CD8-positive, alpha-beta T cell (primary cell): ENCODE measurements at regions of chr19 and their contacts with region 1.

Region 1: DNA sequence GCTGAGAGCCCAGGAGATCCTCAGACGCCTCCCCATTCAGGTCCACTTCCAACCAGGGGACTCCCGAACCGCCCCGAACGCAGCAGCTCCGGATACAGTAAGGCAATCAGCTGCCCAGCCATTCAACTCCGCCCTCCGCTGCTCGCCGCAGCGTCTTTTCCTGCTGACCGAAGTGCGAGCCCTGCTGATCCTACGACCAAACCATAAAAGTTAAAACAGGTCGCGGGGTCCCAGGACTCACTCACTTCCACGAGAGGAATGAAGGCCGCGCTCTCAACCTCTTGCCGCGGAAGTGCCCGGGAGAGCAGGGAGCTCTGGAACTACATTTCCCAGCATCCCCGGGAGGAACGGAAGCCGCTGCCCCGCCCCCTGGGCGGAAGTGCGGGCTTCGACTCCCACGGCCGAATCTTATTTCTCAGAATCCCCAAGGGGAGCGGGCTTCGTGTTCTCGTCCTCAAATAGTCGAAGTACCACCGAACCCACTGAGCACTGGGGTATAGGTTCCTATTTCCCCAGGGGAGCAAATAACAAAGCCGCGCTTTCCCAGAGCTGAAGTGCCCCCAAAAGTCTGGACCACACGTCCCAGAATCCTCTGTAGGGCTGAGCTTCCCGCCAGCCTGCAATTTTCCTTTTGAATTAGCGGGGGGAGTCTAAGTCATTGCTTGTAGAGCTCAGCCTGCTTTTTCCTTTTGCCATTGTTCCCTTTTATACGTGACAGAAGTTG is at the start of gene ZNF45:
- DNase-seq: peak; percentile 68 to 94 (median 88)
- ATAC-seq: peak; percentile 94
- H3K4me3 ChIP-seq: peak within 1 kb of the TSS; percentile 90 to 96
- H3K4me3 Mint-ChIP-seq: peak within 1 kb of the TSS; percentile 96
- H3K27ac ChIP-seq: peak within 1 kb of the TSS; percentile 59 to 85
- H3K27ac Mint-ChIP-seq: peak within 1 kb of the TSS; percentile 90
- H3K4me1 ChIP-seq: peaks cover 13% of the 10 kb centered on the region
- H3K4me1 Mint-ChIP-seq: peaks cover 27% of the 10 kb centered on the region
- H3K27me3 ChIP-seq: no peaks in the 10 kb centered on the region
- H3K27me3 Mint-ChIP-seq: peaks cover 2% of the 10 kb centered on the region
- CTCF ChIP-seq: no peak
- total RNA-seq, gene ZNF45: 6.2 to 7.8 TPM

Region 2: DNA sequence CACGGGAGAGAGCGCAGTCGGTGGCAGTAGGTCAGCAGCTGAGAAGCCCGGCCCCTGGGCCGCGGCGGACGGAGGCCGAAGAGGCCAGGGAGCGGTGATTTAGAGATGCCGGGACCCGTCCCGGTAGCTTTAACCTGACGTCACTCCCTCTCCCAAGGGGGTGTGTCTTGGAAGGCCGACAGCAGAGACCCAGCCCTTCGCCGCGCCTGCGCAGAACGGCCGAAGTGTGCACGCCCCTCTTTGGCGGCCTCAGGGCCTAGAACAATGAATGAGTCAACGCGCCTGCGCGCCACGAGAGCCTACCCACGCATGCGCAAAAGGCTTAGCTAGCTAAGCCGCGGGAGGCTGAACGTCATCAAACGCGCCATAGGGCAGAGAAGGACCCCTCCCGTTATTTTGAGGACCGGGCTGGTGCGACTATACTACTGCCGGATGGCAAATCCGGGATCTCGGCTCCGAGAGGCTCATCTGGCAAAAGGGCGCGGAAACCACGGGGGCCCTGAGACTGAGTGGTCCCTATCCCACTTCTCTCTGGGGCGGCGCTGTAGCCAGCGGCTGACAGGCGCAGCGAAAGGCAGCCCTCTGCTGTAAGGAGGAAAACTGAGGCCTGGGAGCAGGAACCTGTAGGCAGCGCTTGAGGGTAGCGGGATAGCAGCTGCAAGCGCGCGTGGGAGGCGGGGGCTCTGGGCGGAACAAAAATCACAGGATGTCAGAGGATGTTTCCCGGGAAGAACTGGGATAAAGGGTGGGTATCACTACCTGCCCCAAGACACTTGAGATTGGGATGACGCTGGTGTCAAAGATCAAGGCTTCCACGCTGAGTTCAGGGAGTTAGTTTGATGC is 338.9 kb before region 1 on chr19 and contains the starts of genes IRGQ and ZNF576:
- CTCF ChIA-PET with region 1: no interaction called
- POLR2A ChIA-PET with region 1: no interaction called
- intact Hi-C with region 1: no loop called
- DNase-seq: peak; percentile 99 to 100 (median 100)
- ATAC-seq: peak; percentile 75
- H3K4me3 ChIP-seq: peak within 1 kb of the TSS; percentile 91 to 100
- H3K4me3 Mint-ChIP-seq: peak within 1 kb of the TSS; percentile 94
- H3K27ac ChIP-seq: peak within 1 kb of the TSS; percentile 96 to 100
- H3K27ac Mint-ChIP-seq: peak within 1 kb of the TSS; percentile 100
- H3K4me1 ChIP-seq: peaks cover 33% of the 10 kb centered on the region
- H3K4me1 Mint-ChIP-seq: peaks cover 30% of the 10 kb centered on the region
- H3K27me3 ChIP-seq: no peaks in the 10 kb centered on the region
- H3K27me3 Mint-ChIP-seq: no peaks in the 10 kb centered on the region
- CTCF ChIP-seq: no peak
- total RNA-seq, gene IRGQ: 25.5 to 26.5 TPM
- total RNA-seq, gene ZNF576: 4.9 to 5.2 TPM

Region 3: GRCh38 chr19:43826787-43827754 is 108.1 kb before region 1 on chr19 and contains the start of gene ZNF283:
- CTCF ChIA-PET with region 1: no interaction called
- POLR2A ChIA-PET with region 1: no interaction called
- intact Hi-C with region 1: loop called (anchors 1 kb)
- DNase-seq: peak; percentile 64 to 90 (median 81)
- ATAC-seq: peak; percentile 92
- H3K4me3 ChIP-seq: peak within 1 kb of the TSS; percentile 52 to 69
- H3K4me3 Mint-ChIP-seq: peak within 1 kb of the TSS; percentile 88
- H3K27ac ChIP-seq: no peak within 1 kb of the TSS
- H3K27ac Mint-ChIP-seq: peak within 1 kb of the TSS; percentile 39
- H3K4me1 ChIP-seq: peaks cover 12% of the 10 kb centered on the region
- H3K4me1 Mint-ChIP-seq: peaks cover 22% of the 10 kb centered on the region
- H3K27me3 ChIP-seq: no peaks in the 10 kb centered on the region
- H3K27me3 Mint-ChIP-seq: peaks cover 8% of the 10 kb centered on the region
- CTCF ChIP-seq: no peak
- total RNA-seq, gene ZNF283: 1.3 to 1.4 TPM

Region 4: DNA sequence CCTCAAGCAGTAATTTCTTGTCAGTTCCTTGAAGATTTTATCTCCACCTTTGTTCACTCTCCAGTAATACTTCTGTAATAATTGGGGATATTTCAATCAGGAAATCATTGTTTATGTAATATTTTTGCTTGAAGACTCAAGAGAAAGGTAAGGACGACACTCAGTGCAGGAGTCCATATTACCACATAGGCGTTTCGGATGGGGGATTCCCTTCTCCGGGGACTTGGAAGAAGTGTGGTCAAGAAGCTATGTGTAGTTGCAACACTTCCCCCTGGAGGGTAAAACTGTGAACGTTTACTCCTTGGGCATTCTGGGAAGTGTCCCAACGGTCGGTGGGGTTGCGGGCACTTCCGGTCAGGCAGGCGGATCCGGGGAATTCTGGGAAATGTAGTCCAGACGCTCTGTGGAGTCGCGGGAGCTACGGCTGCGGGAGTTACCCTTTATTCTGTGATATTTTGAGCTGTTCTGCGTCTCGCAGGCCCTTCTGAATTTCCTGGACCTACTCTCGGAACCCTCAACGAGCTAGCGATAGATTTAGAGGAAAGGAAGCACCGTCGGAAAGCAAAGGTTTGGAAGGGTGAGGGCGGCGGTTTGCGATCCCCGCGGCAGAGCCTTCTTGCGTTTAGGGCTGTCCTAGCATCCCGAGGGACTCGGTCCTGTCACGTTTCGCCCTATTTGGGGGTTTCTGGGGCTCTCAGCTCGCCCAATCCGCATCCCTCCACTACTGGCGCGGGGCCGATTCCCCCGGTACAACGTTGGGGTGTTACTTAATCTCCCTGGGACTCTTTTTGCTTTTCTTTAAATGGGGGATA is 15.9 kb after region 1 on chr19 and contains the start of gene ZNF221:
- CTCF ChIA-PET with region 1: interaction called, 5 read pairs
- POLR2A ChIA-PET with region 1: interaction called, 5 read pairs
- intact Hi-C with region 1: loop called in 1 of 2 experiments (anchors 1 kb)
- DNase-seq: peak; percentile 4 to 83 (median 52)
- ATAC-seq: peak; percentile 62
- H3K4me3 ChIP-seq: peak within 1 kb of the TSS; percentile 61 to 65
- H3K4me3 Mint-ChIP-seq: peak within 1 kb of the TSS; percentile 95
- H3K27ac ChIP-seq: peak within 1 kb of the TSS; percentile 13 to 34
- H3K27ac Mint-ChIP-seq: peak within 1 kb of the TSS; percentile 74
- H3K4me1 ChIP-seq: peaks cover 7% of the 10 kb centered on the region
- H3K4me1 Mint-ChIP-seq: peaks cover 14% of the 10 kb centered on the region
- H3K27me3 ChIP-seq: no peaks in the 10 kb centered on the region
- H3K27me3 Mint-ChIP-seq: peaks cover 12% of the 10 kb centered on the region
- CTCF ChIP-seq: no peak
- total RNA-seq, gene ZNF221: 0.24 to 0.25 TPM

Region 5: DNA sequence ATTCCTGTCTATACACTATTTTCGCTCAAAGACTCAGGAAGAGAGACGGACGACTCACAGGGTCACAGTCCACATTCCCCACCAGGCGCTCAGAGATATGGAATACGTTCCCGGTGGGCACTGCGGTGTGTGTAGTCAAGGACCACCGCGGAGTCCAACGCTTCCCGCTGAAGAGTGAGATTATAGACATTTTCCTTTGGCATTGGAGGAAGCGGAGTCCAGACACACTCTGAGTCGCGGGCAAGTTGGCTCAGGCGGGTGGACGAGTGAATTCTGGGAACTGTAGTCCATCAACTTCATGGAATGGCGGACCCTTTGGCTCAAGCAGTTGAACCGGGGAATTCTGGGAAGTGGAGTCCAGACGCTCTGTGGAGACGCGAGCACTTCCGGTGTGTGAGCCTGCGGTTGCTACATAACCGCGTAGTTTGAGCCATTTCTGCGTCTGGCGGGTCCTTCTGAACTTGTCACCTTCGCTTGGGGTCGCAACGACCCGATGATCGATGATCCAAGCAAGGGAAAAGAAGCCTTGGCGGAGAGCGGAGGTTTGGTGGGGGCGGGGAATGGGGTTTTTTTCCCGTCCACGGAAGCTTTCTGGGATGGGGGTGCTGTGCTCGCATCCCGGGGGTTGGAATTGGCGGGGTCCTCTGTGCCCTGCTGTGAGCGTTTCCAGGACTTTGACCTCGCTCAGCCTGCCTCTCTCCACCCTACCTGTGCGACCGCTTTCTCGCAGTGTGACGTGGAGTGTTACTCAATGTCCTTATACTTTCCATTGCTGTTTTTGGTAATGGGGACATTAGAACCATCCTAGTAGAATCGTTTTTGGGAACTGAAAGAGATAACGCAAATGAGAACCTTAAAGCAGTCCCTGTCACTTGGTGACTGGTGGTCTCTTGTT is 67.7 kb after region 1 on chr19 and contains the start of gene ZNF230:
- CTCF ChIA-PET with region 1: no interaction called
- POLR2A ChIA-PET with region 1: interaction called, 3 read pairs
- intact Hi-C with region 1: loop called (anchors 1 kb)
- DNase-seq: peak; percentile 64 to 96 (median 82)
- ATAC-seq: peak; percentile 96
- H3K4me3 ChIP-seq: peak within 1 kb of the TSS; percentile 91 to 92
- H3K4me3 Mint-ChIP-seq: peak within 1 kb of the TSS; percentile 99
- H3K27ac ChIP-seq: peak within 1 kb of the TSS; percentile 59 to 81
- H3K27ac Mint-ChIP-seq: peak within 1 kb of the TSS; percentile 98
- H3K4me1 ChIP-seq: peaks cover 12% of the 10 kb centered on the region
- H3K4me1 Mint-ChIP-seq: peaks cover 23% of the 10 kb centered on the region
- H3K27me3 ChIP-seq: no peaks in the 10 kb centered on the region
- H3K27me3 Mint-ChIP-seq: no peaks in the 10 kb centered on the region
- CTCF ChIP-seq: no peak
- total RNA-seq, gene ZNF230: 2.4 to 3.8 TPM

Region 6: DNA sequence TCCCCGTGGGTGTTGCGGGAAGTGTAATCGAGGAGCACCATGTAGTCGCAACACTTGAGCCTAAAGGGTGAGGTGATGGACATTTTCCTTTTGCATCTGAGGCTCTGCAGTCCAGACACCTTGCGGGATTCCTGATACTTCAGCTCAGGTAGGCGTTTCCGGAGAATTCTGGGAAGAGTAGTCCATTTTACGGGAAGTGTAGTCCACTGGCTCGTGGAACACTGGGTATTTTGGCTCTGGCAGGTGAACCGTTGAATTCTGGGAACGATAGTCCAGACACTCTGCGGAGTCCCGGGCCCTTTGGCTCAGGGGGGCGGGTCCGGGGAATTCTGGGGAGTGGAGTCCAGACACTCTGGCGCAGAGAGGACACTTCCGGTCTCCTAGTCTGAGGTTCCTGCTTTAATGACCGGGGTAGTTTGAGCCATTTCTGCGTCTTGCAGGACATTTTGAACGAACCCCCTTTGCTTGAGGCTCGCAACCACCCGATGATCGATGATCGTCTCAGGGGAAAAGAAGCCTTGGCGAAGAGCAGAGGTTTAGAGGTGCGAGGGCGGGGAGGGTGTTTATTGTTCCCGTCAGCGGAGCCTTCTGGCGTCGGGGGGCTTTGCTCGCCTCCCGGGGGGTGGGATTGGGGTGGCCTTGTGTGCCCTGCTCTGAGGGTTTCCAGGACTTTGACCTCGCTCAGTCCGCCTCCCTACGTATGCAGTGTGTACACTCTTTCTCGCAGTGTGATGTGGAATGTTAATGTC is 116.7 kb after region 1 on chr19 and contains the start of gene ZNF223:
- CTCF ChIA-PET with region 1: no interaction called
- POLR2A ChIA-PET with region 1: no interaction called
- intact Hi-C with region 1: loop called in 1 of 2 experiments (anchors 1 kb)
- DNase-seq: peak; percentile 9 to 85 (median 68)
- ATAC-seq: peak; percentile 84
- H3K4me3 ChIP-seq: peak within 1 kb of the TSS; percentile 71 to 77
- H3K4me3 Mint-ChIP-seq: peak within 1 kb of the TSS; percentile 93
- H3K27ac ChIP-seq: peak within 1 kb of the TSS in 1 of 2 experiments; percentile 40
- H3K27ac Mint-ChIP-seq: peak within 1 kb of the TSS; percentile 85
- H3K4me1 ChIP-seq: peaks cover 11% of the 10 kb centered on the region
- H3K4me1 Mint-ChIP-seq: peaks cover 38% of the 10 kb centered on the region
- H3K27me3 ChIP-seq: no peaks in the 10 kb centered on the region
- H3K27me3 Mint-ChIP-seq: no peaks in the 10 kb centered on the region
- CTCF ChIP-seq: no peak
- total RNA-seq, gene ZNF223: 0.72 to 1.3 TPM

Region 7: DNA sequence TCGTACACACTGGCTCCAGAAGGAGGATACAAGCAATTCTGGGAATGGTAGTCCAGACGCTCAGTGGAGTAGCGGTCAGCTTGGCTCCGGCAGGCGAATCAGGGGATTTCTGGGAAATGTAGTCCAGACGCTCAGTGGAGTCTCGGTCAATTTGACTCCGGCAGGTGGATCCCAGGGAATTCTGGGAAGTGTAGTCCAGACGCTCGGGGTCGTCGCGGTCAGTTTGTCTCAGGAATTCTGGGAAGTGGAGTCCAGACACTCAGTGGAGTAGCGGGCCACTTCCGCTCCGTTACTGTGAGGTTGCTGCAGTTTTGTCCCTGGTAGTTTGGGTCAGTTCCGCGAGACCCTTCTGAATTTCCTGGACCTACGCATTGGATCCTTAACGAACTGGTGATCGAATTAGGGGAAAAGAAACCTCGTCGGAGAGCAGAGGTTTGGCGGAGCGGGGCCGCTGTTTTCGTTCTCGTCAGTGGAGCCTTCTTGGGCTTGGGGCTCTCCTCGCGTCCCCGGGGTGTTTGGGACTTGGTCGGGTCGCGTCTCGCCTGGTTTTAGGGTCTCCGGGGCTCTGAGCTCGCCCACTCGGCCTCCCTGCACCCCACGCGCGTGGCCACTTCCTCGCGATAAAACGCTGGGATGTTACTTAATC is 178.1 kb after region 1 on chr19 and contains the start of gene ZNF225:
- CTCF ChIA-PET with region 1: no interaction called
- POLR2A ChIA-PET with region 1: interaction called, 4 read pairs
- intact Hi-C with region 1: loop called in 1 of 2 experiments (anchors 5 kb)
- DNase-seq: peak; percentile 64 to 95 (median 83)
- ATAC-seq: peak; percentile 97
- H3K4me3 ChIP-seq: peak within 1 kb of the TSS; percentile 80 to 92
- H3K4me3 Mint-ChIP-seq: peak within 1 kb of the TSS; percentile 99
- H3K27ac ChIP-seq: peak within 1 kb of the TSS; percentile 40 to 64
- H3K27ac Mint-ChIP-seq: peak within 1 kb of the TSS; percentile 93
- H3K4me1 ChIP-seq: peaks cover 14% of the 10 kb centered on the region
- H3K4me1 Mint-ChIP-seq: peaks cover 34% of the 10 kb centered on the region
- H3K27me3 ChIP-seq: no peaks in the 10 kb centered on the region
- H3K27me3 Mint-ChIP-seq: no peaks in the 10 kb centered on the region
- CTCF ChIP-seq: no peak
- total RNA-seq, gene ZNF225: 1.3 to 1.6 TPM

Region 8: GRCh38 chr19:44304659-44305193 is 369.6 kb after region 1 on chr19 and contains the start of gene ZNF235:
- CTCF ChIA-PET with region 1: no interaction called
- POLR2A ChIA-PET with region 1: interaction called, 3 read pairs
- intact Hi-C with region 1: loop called in 1 of 2 experiments (anchors 1 kb)
- DNase-seq: peak; percentile 22 to 89 (median 70)
- ATAC-seq: peak; percentile 96
- H3K4me3 ChIP-seq: peak within 1 kb of the TSS; percentile 75 to 77
- H3K4me3 Mint-ChIP-seq: peak within 1 kb of the TSS; percentile 94
- H3K27ac ChIP-seq: peak within 1 kb of the TSS; percentile 26 to 52
- H3K27ac Mint-ChIP-seq: peak within 1 kb of the TSS; percentile 85
- H3K4me1 ChIP-seq: peaks cover 15% of the 10 kb centered on the region
- H3K4me1 Mint-ChIP-seq: peaks cover 35% of the 10 kb centered on the region
- H3K27me3 ChIP-seq: no peaks in the 10 kb centered on the region
- H3K27me3 Mint-ChIP-seq: peaks cover 7% of the 10 kb centered on the region
- CTCF ChIP-seq: no peak
- total RNA-seq, gene ZNF235: 2.6 to 3.7 TPM